ENCODE measurements at regions of chr20 and their contacts with region 1.

Region 1: GRCh38 chr20:20083807-20084206 is 31.5 kb downstream of the CFAP61 start:
- DNase-seq: no peak
- H3K4me3 ChIP-seq: peak overlapping the region in 11 of 59 donors; percentile 3 to 41 (median 30)
- H3K27ac ChIP-seq: peak overlapping the region in 4 of 59 donors; percentile 1 to 46 (median 36)
- H3K27me3 ChIP-seq: no peaks in the 10 kb centered on the region
- CTCF ChIP-seq: peak; percentile 44 to 86 (median 68)

Region 2: GRCh38 chr20:20237093-20237959 is 153.5 kb after region 1 on chr20:
- intact Hi-C with region 1: loop called (anchors 1 to 10 kb)
- DNase-seq: peak in 3 of 10 donors; percentile 23 to 39 (median 33)
- H3K4me3 ChIP-seq: no peak overlapping the region
- H3K27ac ChIP-seq: no peak overlapping the region
- H3K27me3 ChIP-seq: no peaks in the 10 kb centered on the region
- CTCF ChIP-seq: peak in 55 of 56 donors; percentile 23 to 83 (median 67)

Measured in dorsolateral prefrontal cortex (tissue), 120 donors.